ENCODE measurements at regions of chr6 and their contacts with region 1.

Region 1: GRCh38 chr6:47787620-47788497 is 6.0 kb downstream of the OPN5 start:
- H3K4me3 ChIP-seq: no peak overlapping the region
- H3K27ac ChIP-seq: no peak overlapping the region
- H3K4me1 ChIP-seq: no peaks in the 10 kb centered on the region
- CTCF ChIP-seq: peak; percentile 92

Region 2: GRCh38 chr6:47804821-47805220 is 17.0 kb after region 1 on chr6:
- CTCF ChIA-PET with region 1: interaction called, 36 read pairs
- POLR2A ChIA-PET with region 1: no interaction called
- H3K4me3 ChIP-seq: no peak overlapping the region
- H3K27ac ChIP-seq: no peak overlapping the region
- H3K4me1 ChIP-seq: no peaks in the 10 kb centered on the region; the same call in 1 of the 2 replicates
- CTCF ChIP-seq: no peak

Region 3: GRCh38 chr6:47932575-47932974 is 144.7 kb after region 1 on chr6:
- CTCF ChIA-PET with region 1: no interaction called
- POLR2A ChIA-PET with region 1: no interaction called
- H3K4me3 ChIP-seq: no peak overlapping the region
- H3K27ac ChIP-seq: no peak overlapping the region
- H3K4me1 ChIP-seq: no peaks in the 10 kb centered on the region
- CTCF ChIP-seq: no peak

Region 4: DNA sequence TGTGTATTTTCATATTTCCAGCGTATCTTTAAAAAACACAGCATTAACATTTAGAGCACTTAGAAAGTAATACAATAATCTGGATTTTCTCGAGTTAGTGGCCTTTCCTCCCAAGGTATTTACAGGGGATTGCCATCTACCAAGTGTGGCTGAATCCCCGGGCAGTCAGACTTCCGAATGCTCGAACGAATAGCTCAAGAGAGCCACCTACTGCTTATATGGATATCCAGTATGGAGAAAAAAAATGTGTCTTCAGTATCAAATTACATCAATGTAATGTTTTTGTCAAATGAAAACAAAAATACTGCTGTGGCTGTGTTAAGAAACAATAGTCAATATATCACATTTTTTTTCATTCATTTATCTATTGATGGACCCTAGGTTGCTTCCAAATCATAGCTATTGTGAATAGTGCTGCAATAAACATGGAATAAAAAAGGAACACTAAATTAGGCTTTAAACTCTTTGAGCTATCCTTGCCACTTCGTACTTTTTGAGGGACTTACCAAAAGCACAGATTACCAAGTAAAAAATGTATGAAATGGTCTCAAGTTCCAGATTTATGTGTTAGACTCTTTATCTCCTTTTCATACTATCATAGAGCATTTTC is 977.6 kb after region 1 on chr6:
- CTCF ChIA-PET with region 1: interaction called, 35 read pairs
- POLR2A ChIA-PET with region 1: no interaction called
- H3K4me3 ChIP-seq: no peak overlapping the region
- H3K27ac ChIP-seq: no peak overlapping the region
- H3K4me1 ChIP-seq: no peaks in the 10 kb centered on the region
- CTCF ChIP-seq: no peak

Measured in HEK293 (cell line).